ENCODE measurements at regions of chr18 and their contacts with region 1.

Region 1: DNA sequence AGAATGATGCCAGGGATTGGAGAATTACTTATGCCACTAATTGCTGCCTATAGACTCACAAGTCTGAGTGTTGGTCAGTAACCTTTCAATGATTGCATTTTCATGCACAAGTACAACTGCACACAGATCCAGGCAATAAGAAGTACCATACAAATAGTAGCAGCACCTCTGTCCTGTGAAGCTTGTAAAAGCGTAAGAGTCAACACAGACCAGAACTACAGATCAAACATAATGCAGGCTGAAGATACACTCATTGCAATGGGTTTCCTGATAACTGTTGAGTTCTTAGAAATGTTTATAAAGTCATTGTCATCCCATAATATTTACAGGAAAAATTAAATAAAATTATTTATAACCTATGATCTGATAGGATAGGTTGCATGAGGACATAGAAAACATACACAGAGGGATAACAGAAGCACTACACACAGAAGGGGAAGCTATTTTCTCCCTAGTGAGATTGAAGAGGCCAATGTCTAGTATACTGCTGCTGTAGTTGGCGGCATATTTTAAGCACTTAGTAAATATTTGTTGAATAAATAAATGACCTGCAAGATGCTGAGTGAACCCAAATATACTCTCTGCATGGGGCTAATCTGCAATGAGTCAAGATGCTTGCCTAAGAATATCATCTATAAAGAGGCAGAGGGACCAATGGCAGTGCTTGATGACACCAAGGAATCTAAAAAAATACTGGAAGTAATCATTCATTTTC is 5.7 kb upstream of the PIK3C3 start:
- DNase-seq: no peak
- H3K4me3 Mint-ChIP-seq: peak overlapping the region; percentile 39
- H3K27ac Mint-ChIP-seq: peak overlapping the region; percentile 86
- H3K4me1 Mint-ChIP-seq: peaks cover 24% of the 10 kb centered on the region
- H3K27me3 Mint-ChIP-seq: peaks cover 7% of the 10 kb centered on the region

Region 2: DNA sequence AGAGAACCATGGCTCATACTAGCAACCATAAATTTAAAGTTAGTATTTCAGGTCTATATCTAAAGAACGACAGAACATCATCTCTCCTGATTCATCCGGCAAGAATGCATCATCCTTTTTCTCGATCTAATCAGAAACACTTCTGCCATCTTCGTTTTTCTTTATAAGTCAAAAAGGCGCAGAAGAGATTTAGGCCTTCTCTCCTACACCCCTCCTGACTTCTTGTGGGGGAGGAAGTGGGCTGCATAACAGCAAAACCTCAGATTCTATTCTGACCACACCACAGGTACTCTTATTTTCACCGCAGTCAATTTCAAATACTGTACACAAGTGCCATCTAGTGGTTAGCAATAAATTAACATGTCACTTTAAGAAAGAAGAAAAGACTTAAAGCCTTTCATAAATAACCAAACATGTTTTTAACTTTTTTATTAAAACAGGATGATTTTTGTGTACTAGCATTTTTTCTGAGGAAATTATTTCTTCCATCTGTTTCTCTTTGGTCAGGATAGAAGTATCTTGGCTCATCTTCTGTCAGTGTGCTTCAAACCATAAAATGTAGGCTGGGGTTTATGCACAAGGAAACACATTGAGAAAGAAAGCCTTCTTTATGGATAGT is 42.7 kb before region 1 on chr18:
- intact Hi-C with region 1: loop called (anchors 5 kb)
- DNase-seq: peak; percentile 80
- H3K4me3 Mint-ChIP-seq: no peak overlapping the region
- H3K27ac Mint-ChIP-seq: peak overlapping the region; percentile 8
- H3K4me1 Mint-ChIP-seq: peaks cover 9% of the 10 kb centered on the region
- H3K27me3 Mint-ChIP-seq: peaks cover 8% of the 10 kb centered on the region

Region 3: DNA sequence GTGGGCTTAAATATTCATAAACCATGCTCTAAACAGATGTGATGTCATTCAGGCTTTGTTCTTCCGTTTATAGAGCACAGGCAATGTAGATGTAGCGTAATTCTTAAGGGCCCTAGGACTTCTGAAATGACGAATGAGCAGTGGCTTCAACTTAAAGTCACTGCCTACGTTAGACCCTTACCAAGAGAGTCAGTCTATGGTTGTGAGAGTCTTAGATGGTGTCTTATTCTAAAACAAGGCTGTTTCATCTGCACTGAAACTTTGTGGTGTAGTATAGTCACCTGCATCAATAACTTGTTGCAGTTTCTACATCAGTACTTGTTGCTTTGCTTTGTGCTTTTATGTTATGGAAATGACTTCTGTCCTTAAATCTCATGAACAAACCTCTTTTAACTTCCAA is 61.7 kb after region 1 on chr18:
- intact Hi-C with region 1: no loop called
- DNase-seq: no peak
- H3K4me3 Mint-ChIP-seq: no peak overlapping the region
- H3K27ac Mint-ChIP-seq: no peak overlapping the region
- H3K4me1 Mint-ChIP-seq: peaks cover 5% of the 10 kb centered on the region
- H3K27me3 Mint-ChIP-seq: no peaks in the 10 kb centered on the region

Measured in activated CD4-positive, alpha-beta T cell treated with anti-CD3 and anti-CD28 coated beads, Interleukin-2, amount 10 ng/mL, durations not matched to agents 24 days and 14 days (primary cell).